Activated CD4-positive, alpha-beta T cell treated with anti-CD3 and anti-CD28 coated beads, Interleukin-2, amount 10 ng/mL, durations not matched to agents 24 days and 14 days (primary cell): ENCODE measurements at regions of chr2 and their contacts with region 1.

Region 1: DNA sequence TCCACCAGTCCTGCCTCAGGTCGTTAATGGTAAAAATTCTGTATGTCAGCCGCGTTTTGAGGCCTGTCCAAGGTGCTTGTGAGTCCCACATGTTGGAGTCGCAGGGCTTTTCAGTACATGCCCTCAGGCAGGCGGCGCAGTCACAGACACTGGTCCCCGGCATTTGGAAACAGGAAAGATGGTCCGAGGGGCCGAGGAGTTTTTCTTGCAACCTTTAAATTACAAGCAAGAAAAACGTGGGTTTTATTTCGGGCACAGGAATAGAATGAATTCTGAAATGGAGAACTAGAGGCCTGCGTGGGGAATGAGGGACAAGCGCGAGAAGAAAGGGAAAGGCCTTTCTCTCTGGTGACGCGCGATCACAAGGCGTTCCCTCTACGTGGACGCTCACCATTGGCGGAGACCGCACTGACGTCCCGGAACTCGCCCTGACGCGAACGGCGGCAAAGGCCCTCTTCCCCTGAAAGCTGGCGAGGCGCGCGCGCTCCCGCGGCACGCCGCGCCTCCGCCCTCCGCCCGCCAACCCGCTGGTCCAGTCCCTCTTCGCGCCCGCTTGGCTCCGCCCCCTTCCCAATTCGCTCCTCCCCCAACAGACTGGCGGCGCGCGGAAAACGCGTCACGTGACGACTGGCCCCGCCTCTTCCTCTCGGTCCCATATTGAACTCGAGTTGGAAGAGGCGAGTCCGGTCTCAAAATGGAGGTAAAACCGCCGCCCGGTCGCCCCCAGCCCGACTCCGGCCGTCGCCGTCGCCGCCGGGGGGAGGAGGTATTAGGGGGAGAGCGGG is at the start of gene HNRNPA3:
- DNase-seq: peak; percentile 100
- H3K4me3 Mint-ChIP-seq: peak within 1 kb of the TSS; percentile 94
- H3K27ac Mint-ChIP-seq: peak within 1 kb of the TSS; percentile 98
- H3K4me1 Mint-ChIP-seq: peaks cover 40% of the 10 kb centered on the region
- H3K27me3 Mint-ChIP-seq: no peaks in the 10 kb centered on the region
- total RNA-seq, gene HNRNPA3: 333 and 336 TPM in 2 replicates

Region 2: DNA sequence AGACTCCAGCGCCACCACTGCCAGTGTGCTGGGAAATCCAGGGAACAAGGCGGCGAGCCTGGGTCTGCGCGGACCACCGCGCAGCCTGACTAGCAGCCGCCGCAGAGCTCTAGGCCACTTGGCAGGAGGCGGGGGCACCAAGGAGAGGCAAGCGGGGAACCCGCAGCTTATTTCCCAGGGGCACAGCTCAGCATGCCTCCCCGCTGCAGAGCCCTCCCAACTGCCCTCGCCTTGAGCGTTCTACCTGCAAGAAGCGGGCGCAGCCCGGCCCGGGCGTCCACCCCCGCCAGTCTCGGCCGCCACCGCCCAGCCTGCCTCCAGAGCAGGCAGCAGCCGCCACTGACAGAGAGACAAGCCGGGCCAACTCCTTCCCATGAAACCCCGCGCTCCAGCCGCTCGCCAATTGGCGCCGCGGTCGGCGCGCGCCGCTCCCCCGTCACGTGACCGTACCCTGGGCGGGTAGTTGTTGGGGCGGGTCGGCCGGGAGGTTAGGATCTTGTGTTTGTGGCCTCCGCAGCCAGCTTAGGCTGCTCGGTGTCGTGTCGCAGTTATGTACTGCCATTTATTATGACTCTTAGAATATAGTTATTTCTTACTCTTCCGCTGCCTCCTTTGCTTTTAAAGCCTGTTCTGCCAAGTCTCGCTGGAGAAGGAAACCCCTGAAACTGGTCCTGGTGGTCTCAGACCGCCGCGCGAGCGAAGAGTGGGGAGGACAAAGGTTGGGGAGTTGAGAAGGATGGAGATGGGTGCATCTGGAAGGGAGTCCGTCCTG is 1210.2 kb before region 1 on chr2 and contains the start of gene LNPK:
- intact Hi-C with region 1: loop called (anchors 5 kb)
- DNase-seq: peak; percentile 98
- H3K4me3 Mint-ChIP-seq: peak within 1 kb of the TSS; percentile 100
- H3K27ac Mint-ChIP-seq: peak within 1 kb of the TSS; percentile 98
- H3K4me1 Mint-ChIP-seq: peaks cover 20% of the 10 kb centered on the region
- H3K27me3 Mint-ChIP-seq: peaks cover 8% of the 10 kb centered on the region
- total RNA-seq, gene LNPK: 46.3 and 47.8 TPM in 2 replicates

Region 3: GRCh38 chr2:176923205-176923604 is 289.1 kb before region 1 on chr2:
- intact Hi-C with region 1: no loop called
- DNase-seq: no peak
- H3K4me3 Mint-ChIP-seq: no peak overlapping the region
- H3K27ac Mint-ChIP-seq: no peak overlapping the region
- H3K4me1 Mint-ChIP-seq: no peaks in the 10 kb centered on the region
- H3K27me3 Mint-ChIP-seq: peaks cover 20% of the 10 kb centered on the region

Region 4: DNA sequence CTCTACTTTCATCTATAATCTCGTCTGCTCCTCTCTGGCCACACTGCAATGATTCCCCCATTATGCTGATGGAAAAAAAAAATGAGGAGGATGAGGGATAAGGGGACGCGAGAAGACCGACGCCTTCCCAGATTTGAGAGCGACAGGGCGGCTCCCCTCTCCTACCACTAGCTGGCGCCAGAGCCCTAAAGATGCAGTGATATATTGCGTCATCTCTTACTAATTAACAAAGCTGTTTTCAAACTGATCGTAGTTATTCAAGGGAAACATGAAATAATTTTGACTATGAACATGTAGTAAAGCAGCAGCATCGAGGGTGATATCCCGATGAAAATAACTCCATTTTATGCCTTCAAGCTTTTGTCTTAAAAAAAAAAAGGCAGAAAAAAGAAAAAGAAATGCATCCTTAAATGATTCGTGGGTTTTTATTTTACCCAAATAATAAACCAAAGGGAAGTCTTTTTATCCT is 47.7 kb before region 1 on chr2:
- intact Hi-C with region 1: loop called (anchors 1 kb)
- DNase-seq: peak; percentile 94
- H3K4me3 Mint-ChIP-seq: no peak overlapping the region
- H3K27ac Mint-ChIP-seq: no peak overlapping the region
- H3K4me1 Mint-ChIP-seq: peaks cover 27% of the 10 kb centered on the region
- H3K27me3 Mint-ChIP-seq: peaks cover 11% of the 10 kb centered on the region

Region 5: GRCh38 chr2:177332041-177332991 is 120.0 kb after region 1 on chr2:
- intact Hi-C with region 1: loop called (anchors 5 kb)
- DNase-seq: peak; percentile 88
- H3K4me3 Mint-ChIP-seq: no peak overlapping the region
- H3K27ac Mint-ChIP-seq: no peak overlapping the region
- H3K4me1 Mint-ChIP-seq: peaks cover 15% of the 10 kb centered on the region
- H3K27me3 Mint-ChIP-seq: no peaks in the 10 kb centered on the region

Region 6: GRCh38 chr2:177353187-177353478 is 140.8 kb after region 1 on chr2:
- intact Hi-C with region 1: no loop called
- DNase-seq: no peak
- H3K4me3 Mint-ChIP-seq: no peak overlapping the region
- H3K27ac Mint-ChIP-seq: no peak overlapping the region
- H3K4me1 Mint-ChIP-seq: no peaks in the 10 kb centered on the region
- H3K27me3 Mint-ChIP-seq: no peaks in the 10 kb centered on the region

Region 7: DNA sequence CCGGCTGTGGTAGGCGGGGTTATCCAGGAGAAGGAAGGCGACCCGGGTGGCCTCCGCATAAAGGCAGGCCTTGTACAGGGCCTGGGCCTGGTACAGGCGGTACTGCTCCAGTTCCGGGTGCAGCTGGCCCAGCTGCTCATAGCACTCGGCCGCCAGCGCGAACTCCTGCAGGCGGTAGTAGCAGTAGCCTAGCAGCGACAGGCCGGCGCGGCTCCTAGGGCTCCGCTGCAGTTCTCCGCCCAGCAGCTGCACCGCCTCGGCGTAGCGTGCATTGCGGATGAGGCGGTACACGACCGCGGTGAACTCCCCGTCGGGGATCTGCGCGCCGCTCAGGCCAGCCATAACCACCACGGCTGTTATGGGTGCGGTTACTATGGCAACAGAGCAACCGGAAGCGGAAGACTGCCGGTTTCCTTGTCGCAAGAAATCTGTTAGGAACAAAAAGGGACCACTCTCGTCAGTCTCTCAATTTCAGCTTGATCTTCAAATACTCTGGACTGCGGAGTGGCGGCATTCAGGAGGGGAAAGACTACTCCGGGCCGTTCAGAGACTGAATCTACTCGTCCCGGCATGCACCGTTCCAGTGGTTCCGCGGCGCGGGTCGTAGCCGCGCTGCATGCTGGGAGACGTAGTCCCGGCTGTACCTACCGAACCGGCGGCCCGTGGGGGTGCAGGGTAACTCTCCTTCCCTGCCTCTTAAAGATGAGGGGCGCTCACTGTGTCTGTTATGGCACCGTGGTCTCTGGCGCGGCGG is 340.3 kb after region 1 on chr2:
- intact Hi-C with region 1: loop called (anchors 2 kb)
- DNase-seq: peak; percentile 98
- H3K4me3 Mint-ChIP-seq: peak overlapping the region; percentile 95
- H3K27ac Mint-ChIP-seq: peak overlapping the region; percentile 100
- H3K4me1 Mint-ChIP-seq: peaks cover 11% of the 10 kb centered on the region
- H3K27me3 Mint-ChIP-seq: peaks cover 7% of the 10 kb centered on the region

Region 8: GRCh38 chr2:178450774-178451525 is 1238.7 kb after region 1 on chr2 and contains the starts of genes PJVK and PRKRA:
- intact Hi-C with region 1: loop called (anchors 2 kb)
- DNase-seq: peak; percentile 99
- H3K4me3 Mint-ChIP-seq: peak within 1 kb of the TSS; percentile 94
- H3K27ac Mint-ChIP-seq: peak within 1 kb of the TSS; percentile 98
- H3K4me1 Mint-ChIP-seq: peaks cover 25% of the 10 kb centered on the region
- H3K27me3 Mint-ChIP-seq: peaks cover 7% of the 10 kb centered on the region
- total RNA-seq, gene PJVK: 2.0 and 2.3 TPM in 2 replicates
- total RNA-seq, gene PRKRA: 52.4 and 61.2 TPM in 2 replicates